ENCODE measurements at regions of chr17 and their contacts with region 1.

Region 1: DNA sequence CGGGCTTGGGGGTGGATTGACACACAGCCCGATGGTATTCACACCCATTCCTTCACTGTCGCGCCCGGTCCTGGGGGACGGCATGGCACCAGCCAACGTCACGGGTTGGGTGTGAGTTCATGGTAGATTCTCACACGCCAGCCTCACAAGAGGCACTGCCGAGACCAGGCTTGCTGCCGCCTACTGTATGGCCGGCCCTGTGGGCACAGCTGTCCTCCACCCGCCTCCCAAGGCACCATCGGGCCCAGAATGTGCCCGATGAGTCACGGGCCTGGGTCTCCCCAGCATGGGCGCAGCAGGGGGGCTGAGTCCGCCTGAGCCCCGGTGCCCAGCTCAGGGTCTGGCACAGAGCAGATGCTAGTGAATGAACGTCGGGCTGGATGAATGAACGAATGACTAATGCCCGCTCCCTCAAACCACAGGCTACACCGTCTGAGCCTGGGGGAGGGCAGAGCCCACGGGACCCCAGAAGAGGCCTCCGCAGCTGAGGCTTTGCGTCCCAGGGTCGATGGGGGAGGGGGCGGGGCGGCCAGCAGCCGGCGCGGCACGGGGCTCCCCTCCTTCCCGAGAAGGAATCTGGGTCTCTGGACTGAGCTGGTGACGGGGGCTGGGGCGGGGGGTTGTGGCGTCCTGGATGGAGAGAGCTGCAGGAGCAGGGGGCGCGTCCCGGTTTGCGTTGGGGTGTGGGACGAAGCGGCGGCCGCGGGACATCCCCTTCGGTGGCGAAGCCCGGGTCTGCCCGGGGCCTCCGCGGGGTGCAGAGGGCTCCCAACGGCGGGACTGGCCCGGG is 829 bp downstream of the PITPNM3 start:
- DNase-seq: peak; percentile 51 to 75 (median 57)
- H3K4me3 ChIP-seq: peak overlapping the region; percentile 40
- H3K27ac ChIP-seq: peak overlapping the region; percentile 80 to 91
- H3K4me1 ChIP-seq: peaks cover 31% of the 10 kb centered on the region
- H3K27me3 ChIP-seq: no peaks in the 10 kb centered on the region
- CTCF ChIP-seq: no peak
- EP300 ChIP-seq: no peak
- POLR2A ChIP-seq: no peak

Region 2: DNA sequence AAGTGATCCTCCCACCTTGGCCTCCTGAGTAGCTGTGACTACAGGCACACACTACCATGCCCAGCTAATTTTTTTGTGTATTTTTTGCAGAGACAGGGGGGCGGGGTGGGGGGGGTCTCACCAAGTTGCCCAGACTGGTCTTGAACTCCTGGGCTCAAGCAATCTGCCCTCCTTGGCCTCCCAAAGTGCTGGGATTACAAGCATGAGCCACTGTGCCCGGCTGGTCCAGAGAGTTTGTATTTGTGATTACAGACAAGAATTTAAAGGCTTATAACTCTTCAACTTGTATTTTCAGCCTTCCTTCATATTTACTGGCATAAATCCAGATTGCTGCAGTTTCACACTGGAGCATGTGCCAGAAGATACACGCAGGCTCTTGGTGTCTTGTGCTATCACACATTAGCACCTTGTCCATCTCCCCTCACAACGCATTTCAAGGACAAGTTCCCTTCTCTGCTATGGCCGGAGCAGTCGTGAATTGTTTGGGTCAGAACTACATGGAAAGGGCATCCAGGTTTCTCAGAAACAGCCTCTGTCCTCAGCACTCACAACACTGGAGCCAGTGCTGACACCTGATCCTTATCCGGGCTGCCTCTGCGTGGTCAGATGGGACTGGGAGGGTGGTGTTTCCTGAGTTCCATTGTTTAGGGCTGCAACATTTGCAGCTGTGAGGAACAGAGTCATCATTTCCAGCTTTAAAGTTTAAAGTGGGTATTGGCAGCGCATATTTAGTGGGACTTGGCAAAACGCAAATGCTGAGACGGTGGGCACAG is 457.3 kb before region 1 on chr17:
- intact Hi-C with region 1: no loop called
- DNase-seq: no peak
- H3K4me3 ChIP-seq: no peak overlapping the region
- H3K27ac ChIP-seq: no peak overlapping the region
- H3K4me1 ChIP-seq: no peaks in the 10 kb centered on the region
- H3K27me3 ChIP-seq: no peaks in the 10 kb centered on the region
- CTCF ChIP-seq: no peak
- EP300 ChIP-seq: no peak
- POLR2A ChIP-seq: no peak

Region 3: DNA sequence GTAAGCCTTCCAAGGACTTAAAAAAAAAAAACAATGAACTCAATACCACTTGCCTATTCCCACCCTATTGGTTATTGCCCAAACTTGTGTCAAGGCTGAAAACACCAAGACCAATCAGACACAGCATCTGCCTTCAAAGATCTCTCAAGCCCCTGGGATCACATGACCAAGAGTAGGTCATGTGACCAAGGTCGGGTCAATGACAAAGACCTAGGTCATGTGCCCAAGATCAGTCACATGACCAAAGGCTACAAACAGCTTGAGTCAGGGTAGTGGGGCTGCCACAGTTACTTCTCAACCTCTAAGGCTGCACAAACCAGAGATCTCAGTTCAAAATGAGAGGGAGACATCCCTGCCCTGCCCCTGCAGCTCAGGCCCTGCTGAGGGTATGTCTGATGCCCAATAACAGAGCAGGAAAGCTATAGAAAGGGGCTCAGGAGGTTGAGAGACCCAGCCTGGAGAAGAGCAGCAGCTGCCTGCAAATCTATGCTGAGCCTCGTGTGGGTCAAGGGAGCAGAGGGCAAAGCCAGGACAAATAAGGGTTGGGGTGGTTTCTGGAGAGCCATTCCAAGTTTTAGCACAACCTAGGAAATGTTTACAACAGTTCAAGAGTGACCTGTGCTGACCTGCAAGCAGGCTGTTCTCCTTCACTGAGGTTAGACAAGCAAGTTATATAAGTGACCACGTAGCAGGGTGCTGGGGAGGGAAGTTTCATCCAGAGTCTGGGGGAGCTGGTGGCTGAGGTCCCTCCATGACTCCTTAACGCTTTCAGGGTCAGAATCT is 62.4 kb before region 1 on chr17:
- intact Hi-C with region 1: loop called in 1 of 4 experiments (anchors 5 kb)
- DNase-seq: peak in 4 of 5 donors; percentile 55 to 80 (median 70)
- H3K4me3 ChIP-seq: no peak overlapping the region
- H3K27ac ChIP-seq: peak overlapping the region; percentile 51 to 75
- H3K4me1 ChIP-seq: peaks cover 33% of the 10 kb centered on the region
- H3K27me3 ChIP-seq: no peaks in the 10 kb centered on the region
- CTCF ChIP-seq: no peak
- EP300 ChIP-seq: no peak
- POLR2A ChIP-seq: no peak